ENCODE measurements at regions of chr3 and their contacts with region 1.

Region 1: GRCh38 chr3:155701882-155702465 is 42.9 kb downstream of the PLCH1 start:
- DNase-seq: peak; percentile 12
- H3K4me3 ChIP-seq: no peak overlapping the region
- H3K27me3 ChIP-seq: no peaks in the 10 kb centered on the region
- CTCF ChIP-seq: peak; percentile 48

Region 2: DNA sequence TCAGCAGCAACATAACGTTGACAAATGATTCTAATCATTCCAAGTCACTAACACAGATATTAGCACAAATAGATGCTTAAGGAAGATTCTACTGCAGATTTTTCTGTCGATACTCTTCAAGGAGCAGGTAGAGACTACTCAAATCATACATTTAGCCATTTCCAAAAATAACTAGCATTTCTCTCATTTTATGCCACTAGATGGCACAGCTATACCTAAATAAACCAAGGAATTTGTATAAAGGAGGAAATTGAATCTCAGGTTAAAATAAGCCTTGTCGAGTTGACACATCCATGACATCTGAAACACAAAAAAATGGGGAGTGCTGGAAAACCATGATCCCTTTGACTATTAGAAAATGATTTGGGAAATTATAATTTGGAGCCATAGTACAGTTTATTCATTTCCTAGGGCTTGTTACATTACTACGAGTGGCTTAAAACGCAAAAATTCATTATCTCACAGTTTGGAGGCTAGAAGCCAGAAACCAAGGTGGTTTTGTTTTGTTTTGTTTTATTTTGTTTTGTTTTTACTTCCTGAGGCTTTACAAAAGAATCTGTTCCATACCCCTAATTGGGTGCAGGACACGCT is 349.0 kb before region 1 on chr3:
- CTCF ChIA-PET with region 1: interaction called, 52 read pairs
- POLR2A ChIA-PET with region 1: no interaction called
- DNase-seq: no peak
- H3K4me3 ChIP-seq: no peak overlapping the region
- H3K27me3 ChIP-seq: no peaks in the 10 kb centered on the region
- CTCF ChIP-seq: peak; percentile 52

Region 3: GRCh38 chr3:155382396-155383042 is 319.5 kb before region 1 on chr3:
- CTCF ChIA-PET with region 1: interaction called, 103 read pairs
- POLR2A ChIA-PET with region 1: interaction called, 3 read pairs
- DNase-seq: no peak
- H3K4me3 ChIP-seq: no peak overlapping the region
- H3K27me3 ChIP-seq: no peaks in the 10 kb centered on the region
- CTCF ChIP-seq: peak; percentile 89

Region 4: GRCh38 chr3:155387571-155387970 is 314.4 kb before region 1 on chr3:
- CTCF ChIA-PET with region 1: interaction called, 103 read pairs
- POLR2A ChIA-PET with region 1: interaction called, 6 read pairs
- DNase-seq: no peak
- H3K4me3 ChIP-seq: no peak overlapping the region
- H3K27me3 ChIP-seq: no peaks in the 10 kb centered on the region
- CTCF ChIP-seq: no peak

Region 5: DNA sequence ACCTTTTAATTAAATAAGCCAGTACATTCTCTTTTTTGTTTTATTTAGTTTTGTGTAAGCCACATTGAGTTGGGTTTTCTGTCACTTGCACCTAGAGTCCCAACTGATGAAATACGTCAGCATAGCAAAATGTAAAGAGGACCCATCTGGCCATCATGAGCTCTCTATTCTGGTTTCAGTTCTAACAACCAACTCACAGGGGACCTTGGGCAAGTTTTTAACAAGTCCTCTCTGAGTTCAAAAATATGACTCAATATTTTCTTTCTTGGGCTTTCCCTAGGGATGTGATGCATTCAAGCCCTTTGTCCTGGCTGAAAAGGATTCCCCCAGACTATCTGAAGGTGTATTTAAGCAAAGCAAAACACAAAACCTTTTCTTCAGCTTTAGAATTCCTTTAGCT is 10.0 kb after region 1 on chr3:
- CTCF ChIA-PET with region 1: interaction called, 12 read pairs
- POLR2A ChIA-PET with region 1: no interaction called
- DNase-seq: no peak
- H3K4me3 ChIP-seq: no peak overlapping the region
- H3K27me3 ChIP-seq: no peaks in the 10 kb centered on the region
- CTCF ChIP-seq: no peak